ENCODE measurements at regions of chr21 and their contacts with region 1.

Region 1: DNA sequence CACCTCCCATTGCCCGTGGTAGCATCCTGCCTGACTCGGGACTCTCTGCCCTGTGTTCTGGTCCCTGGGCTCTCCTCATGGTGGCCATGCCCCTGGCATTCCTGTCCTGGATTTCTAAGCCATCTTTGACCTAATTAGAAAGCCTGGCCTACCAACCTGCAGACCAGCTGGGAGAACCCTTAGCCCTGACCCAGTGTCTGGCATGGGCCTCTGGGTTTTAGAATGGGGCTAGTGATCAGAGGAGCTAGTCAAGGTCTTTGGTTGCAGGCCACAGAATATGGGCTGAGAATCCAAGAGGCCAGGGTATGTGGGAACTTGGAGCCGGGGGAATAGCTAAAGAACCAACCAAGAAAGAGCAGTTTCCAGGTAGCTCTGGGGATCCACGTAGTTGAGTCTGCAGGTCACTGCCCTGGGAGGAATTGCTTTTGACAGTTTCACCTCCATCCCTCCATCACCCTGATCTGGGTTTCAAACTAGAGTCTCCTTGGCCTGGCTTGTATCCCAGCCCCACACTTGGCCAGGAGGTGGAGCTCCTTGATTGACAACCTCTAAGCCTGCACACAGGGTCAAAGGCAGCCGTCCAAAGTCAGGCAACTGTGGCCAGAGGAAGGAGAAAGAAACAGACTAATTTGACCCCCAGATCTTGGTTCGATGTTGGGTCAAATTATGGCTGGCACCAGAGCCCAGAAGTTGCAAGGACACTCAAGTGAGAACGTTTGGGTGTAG is 54.7 kb upstream of the ABCG1 start:
- DNase-seq: peak; percentile 83
- H3K4me3 Mint-ChIP-seq: no peak overlapping the region
- H3K27ac Mint-ChIP-seq: no peak overlapping the region
- H3K4me1 Mint-ChIP-seq: peaks cover 33% of the 10 kb centered on the region
- H3K27me3 Mint-ChIP-seq: peaks cover 1% of the 10 kb centered on the region

Region 2: GRCh38 chr21:42238185-42238934 is 74.1 kb after region 1 on chr21:
- CTCF ChIA-PET with region 1: interaction called, 8 read pairs
- intact Hi-C with region 1: loop called (anchors 1 kb)
- DNase-seq: peak; percentile 66
- H3K4me3 Mint-ChIP-seq: peak overlapping the region; percentile 13
- H3K27ac Mint-ChIP-seq: peak overlapping the region; percentile 95
- H3K4me1 Mint-ChIP-seq: peaks cover 53% of the 10 kb centered on the region
- H3K27me3 Mint-ChIP-seq: no peaks in the 10 kb centered on the region

Region 3: GRCh38 chr21:42252778-42253340 is 88.6 kb after region 1 on chr21:
- CTCF ChIA-PET with region 1: interaction called, 6 read pairs
- intact Hi-C with region 1: loop called (anchors 1 kb)
- DNase-seq: no peak
- H3K4me3 Mint-ChIP-seq: no peak overlapping the region
- H3K27ac Mint-ChIP-seq: no peak overlapping the region
- H3K4me1 Mint-ChIP-seq: peaks cover 11% of the 10 kb centered on the region
- H3K27me3 Mint-ChIP-seq: no peaks in the 10 kb centered on the region

Region 4: DNA sequence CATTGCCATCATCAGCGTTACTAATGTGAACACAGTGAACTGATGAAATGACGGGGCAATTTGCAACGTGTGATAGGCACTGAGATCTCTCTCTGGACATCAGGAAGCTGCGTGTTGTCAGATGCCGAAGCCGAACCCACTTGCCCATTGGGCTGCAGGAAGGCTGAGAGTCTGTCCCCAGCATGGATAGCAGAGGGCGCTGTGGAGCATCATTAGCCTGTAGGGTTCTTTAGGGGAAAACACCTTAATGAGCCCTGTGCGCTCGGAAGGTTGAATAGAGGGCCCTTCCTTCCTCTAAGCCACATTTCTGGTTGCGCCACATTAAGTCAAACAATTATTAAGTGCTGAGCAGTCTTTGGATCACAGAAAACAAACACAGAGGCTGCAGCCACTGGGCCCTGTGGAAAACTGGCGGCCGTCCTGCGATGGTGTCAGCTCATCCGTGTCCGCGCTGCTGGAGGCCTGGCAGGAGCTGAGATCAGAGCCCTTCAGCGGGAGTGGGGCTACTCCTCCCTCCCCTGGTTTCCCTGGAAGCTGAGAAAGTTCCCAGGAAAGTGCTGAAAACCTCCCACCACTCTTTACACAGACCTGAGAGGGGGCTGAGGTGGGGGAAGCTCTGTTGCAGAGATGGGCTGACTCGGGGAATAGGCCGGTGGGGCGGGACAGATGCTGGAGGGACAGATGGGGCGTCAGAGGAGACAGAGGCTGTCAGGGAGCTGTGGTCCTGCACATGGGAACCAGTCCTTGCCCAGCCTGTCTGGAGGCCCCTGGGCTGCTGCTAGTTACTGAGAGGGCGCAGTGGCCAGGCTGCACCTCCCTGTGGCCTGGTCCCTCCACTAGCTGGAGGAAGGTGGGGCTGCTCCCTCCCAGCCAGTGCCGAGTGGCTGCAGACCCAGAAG is 173.9 kb after region 1 on chr21:
- CTCF ChIA-PET with region 1: no interaction called
- intact Hi-C with region 1: no loop called
- DNase-seq: peak; percentile 94
- H3K4me3 Mint-ChIP-seq: no peak overlapping the region
- H3K27ac Mint-ChIP-seq: no peak overlapping the region
- H3K4me1 Mint-ChIP-seq: peaks cover 8% of the 10 kb centered on the region
- H3K27me3 Mint-ChIP-seq: no peaks in the 10 kb centered on the region

Region 5: GRCh38 chr21:42456457-42456856 is 292.2 kb after region 1 on chr21:
- CTCF ChIA-PET with region 1: no interaction called
- intact Hi-C with region 1: loop called (anchors 5 kb)
- DNase-seq: peak; percentile 83
- H3K4me3 Mint-ChIP-seq: no peak overlapping the region
- H3K27ac Mint-ChIP-seq: peak overlapping the region; percentile 57
- H3K4me1 Mint-ChIP-seq: peaks cover 42% of the 10 kb centered on the region
- H3K27me3 Mint-ChIP-seq: no peaks in the 10 kb centered on the region

Measured in activated naive CD4-positive, alpha-beta T cell treated with anti-CD3 and anti-CD28 coated beads for 36 hours (primary cell).